ENCODE measurements at regions of chr11 and their contacts with region 1.

Region 1: DNA sequence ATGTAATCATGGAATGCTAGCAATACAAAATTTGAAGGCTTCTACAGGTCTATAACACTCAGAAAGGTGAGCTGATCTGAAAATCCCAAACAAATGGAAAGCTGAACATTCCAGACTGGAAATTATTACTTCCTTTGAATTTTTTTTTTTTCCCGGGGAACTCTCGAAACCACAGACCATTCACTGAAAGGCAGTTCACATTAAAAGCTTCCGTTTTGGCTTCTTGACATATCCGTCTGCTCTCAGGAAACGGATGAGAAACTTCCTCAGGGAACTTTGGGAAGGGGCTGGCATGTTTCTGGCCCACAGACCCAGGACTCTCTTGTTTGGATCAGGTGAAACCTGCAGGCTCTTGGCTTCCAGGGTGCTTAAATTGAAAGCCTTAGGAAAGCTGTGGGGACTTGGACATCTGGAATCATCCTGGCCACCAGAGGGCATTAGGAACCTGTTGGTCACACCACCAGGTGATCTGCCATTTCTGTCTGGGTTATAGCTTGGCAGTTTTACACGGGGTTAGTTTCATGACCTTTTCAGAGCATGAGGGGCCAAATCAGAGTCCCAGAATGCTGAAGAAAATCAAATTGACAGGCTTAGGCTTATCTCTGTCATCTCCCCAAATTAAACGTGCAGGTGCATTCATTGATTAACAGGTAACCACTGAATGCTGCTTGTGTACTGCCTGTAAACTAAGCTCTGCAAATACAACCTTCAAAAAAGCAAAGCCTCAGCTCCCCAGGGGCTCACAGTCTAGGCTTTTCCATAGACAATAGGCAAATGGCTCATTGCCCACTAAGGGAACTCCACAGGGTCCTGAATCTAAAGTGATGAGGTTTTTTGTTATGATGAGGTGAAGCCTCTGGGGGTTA is 22.7 kb upstream of the GRAMD1B start:
- DNase-seq: peak; percentile 43 to 85 (median 58)
- ATAC-seq: peak; percentile 78
- H3K4me3 ChIP-seq: no peak overlapping the region
- H3K4me3 Mint-ChIP-seq: no peak overlapping the region
- H3K27ac ChIP-seq: no peak overlapping the region
- H3K27ac Mint-ChIP-seq: no peak overlapping the region
- H3K4me1 ChIP-seq: peaks cover 5% of the 10 kb centered on the region
- H3K4me1 Mint-ChIP-seq: peaks cover 5% of the 10 kb centered on the region
- H3K27me3 ChIP-seq: peaks cover 0 to 6% of the 10 kb centered on the region in 2 experiments
- H3K27me3 Mint-ChIP-seq: no peaks in the 10 kb centered on the region
- CTCF ChIP-seq: peak; percentile 81

Region 2: GRCh38 chr11:121557348-121557747 is 1850.0 kb before region 1 on chr11:
- CTCF ChIA-PET with region 1: no interaction called
- POLR2A ChIA-PET with region 1: no interaction called
- intact Hi-C with region 1: no loop called
- DNase-seq: no peak
- ATAC-seq: no peak
- H3K4me3 ChIP-seq: no peak overlapping the region
- H3K4me3 Mint-ChIP-seq: no peak overlapping the region
- H3K27ac ChIP-seq: no peak overlapping the region
- H3K27ac Mint-ChIP-seq: peak overlapping the region; percentile 52
- H3K4me1 ChIP-seq: no peaks in the 10 kb centered on the region
- H3K4me1 Mint-ChIP-seq: peaks cover 28% of the 10 kb centered on the region
- H3K27me3 ChIP-seq: no peaks in the 10 kb centered on the region
- H3K27me3 Mint-ChIP-seq: no peaks in the 10 kb centered on the region
- CTCF ChIP-seq: no peak

Region 3: GRCh38 chr11:123272565-123272964 is 134.8 kb before region 1 on chr11:
- CTCF ChIA-PET with region 1: no interaction called
- POLR2A ChIA-PET with region 1: no interaction called
- intact Hi-C with region 1: no loop called
- DNase-seq: no peak
- ATAC-seq: no peak
- H3K4me3 ChIP-seq: no peak overlapping the region
- H3K4me3 Mint-ChIP-seq: no peak overlapping the region
- H3K27ac ChIP-seq: no peak overlapping the region
- H3K27ac Mint-ChIP-seq: no peak overlapping the region
- H3K4me1 ChIP-seq: no peaks in the 10 kb centered on the region
- H3K4me1 Mint-ChIP-seq: peaks cover 8% of the 10 kb centered on the region
- H3K27me3 ChIP-seq: no peaks in the 10 kb centered on the region
- H3K27me3 Mint-ChIP-seq: peaks cover 1% of the 10 kb centered on the region
- CTCF ChIP-seq: no peak

Region 4: GRCh38 chr11:123301696-123302400 is 105.5 kb before region 1 on chr11:
- CTCF ChIA-PET with region 1: no interaction called
- POLR2A ChIA-PET with region 1: no interaction called
- intact Hi-C with region 1: loop called in 1 of 2 experiments (anchors 5 kb)
- DNase-seq: peak; percentile 26 to 85 (median 60)
- ATAC-seq: peak; percentile 77
- H3K4me3 ChIP-seq: peak overlapping the region; percentile 61
- H3K4me3 Mint-ChIP-seq: peak overlapping the region; percentile 59
- H3K27ac ChIP-seq: peak overlapping the region in 1 of 2 donors; percentile 13
- H3K27ac Mint-ChIP-seq: peak overlapping the region; percentile 7
- H3K4me1 ChIP-seq: peaks cover 40% of the 10 kb centered on the region
- H3K4me1 Mint-ChIP-seq: peaks cover 37% of the 10 kb centered on the region
- H3K27me3 ChIP-seq: no peaks in the 10 kb centered on the region
- H3K27me3 Mint-ChIP-seq: no peaks in the 10 kb centered on the region
- CTCF ChIP-seq: peak; percentile 85

Region 5: DNA sequence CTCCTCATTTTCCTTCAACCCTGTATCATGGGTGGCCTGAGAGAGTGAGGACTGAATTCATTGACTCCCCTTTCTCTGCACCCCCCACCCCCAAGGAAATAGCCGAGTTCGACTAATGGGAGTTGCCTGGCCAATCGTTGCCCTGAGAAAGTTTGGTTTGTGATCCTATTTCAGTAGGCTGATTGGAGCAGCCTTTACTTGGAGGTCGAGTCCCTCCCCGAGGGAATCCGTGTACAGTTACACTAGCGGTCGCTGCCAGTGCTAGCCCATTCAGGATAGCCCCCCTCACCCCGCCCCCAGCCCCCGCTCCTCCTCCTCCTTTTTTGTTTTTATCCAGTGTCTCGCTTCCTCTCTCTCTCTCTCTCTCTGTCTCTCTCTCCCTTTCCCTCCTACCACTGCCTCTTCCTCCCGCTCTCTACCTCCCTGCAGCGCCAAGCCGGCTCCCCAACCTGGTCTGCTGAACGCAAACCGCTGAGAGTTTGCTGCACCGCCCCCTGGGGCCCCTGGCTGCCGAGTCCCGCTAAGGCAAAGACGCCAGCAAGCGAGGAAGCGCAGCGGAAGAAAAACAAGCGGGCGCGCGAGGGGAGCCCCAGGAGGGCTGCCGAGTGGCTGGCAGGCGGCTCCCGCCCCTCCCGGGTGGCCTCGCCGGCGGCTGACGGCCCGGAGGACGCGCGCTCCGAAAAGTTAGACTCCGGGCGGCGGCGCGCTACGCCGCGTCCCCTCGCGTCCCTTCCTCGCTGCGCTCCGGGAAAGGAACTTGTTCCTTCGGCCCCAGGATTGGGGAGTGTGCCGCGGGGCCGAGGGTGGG is 22.8 kb after region 1 on chr11 and contains the start of gene GRAMD1B:
- CTCF ChIA-PET with region 1: interaction called, 20 read pairs
- POLR2A ChIA-PET with region 1: interaction called, 11 read pairs
- intact Hi-C with region 1: loop called (anchors 1 to 2 kb)
- DNase-seq: peak; percentile 66 to 88 (median 78)
- ATAC-seq: peak; percentile 85
- H3K4me3 ChIP-seq: peak within 1 kb of the TSS; percentile 74
- H3K4me3 Mint-ChIP-seq: peak within 1 kb of the TSS; percentile 96
- H3K27ac ChIP-seq: peak within 1 kb of the TSS; percentile 6 to 42
- H3K27ac Mint-ChIP-seq: peak within 1 kb of the TSS; percentile 76
- H3K4me1 ChIP-seq: peaks cover 24% of the 10 kb centered on the region
- H3K4me1 Mint-ChIP-seq: peaks cover 28% of the 10 kb centered on the region
- H3K27me3 ChIP-seq: no peaks in the 10 kb centered on the region
- H3K27me3 Mint-ChIP-seq: no peaks in the 10 kb centered on the region
- CTCF ChIP-seq: no peak
- total RNA-seq, gene GRAMD1B: 16.1 to 21.8 TPM

Region 6: DNA sequence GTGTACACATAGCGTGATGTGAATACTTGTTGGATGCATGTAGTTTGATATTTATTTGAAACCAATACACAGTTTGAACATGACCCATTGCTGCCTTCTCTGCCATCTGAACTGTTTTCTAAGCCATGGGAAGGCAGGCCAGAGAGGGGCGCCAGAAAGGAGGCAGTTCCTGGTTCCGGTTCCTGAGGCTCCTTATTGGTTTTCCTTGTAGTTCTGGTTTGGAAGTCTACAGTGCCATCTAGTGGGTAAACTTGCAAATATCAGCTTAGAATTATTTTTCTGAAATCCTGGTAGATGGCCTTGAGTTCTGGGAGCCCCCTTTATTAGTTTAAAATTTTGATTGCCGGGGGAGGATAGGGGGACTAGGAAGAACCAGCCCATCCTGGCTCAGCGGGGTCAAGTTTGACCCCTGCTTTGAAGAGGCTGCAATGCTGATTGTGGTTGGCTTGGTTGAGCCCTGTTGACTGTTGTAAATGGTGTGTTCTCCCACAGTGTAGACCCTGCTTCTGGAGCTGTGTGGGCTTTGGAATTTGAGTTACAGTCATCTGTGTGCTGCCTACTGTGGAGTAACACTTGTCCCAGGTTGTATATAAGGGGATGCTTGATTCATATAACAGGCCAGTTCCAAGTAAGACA is 71.1 kb after region 1 on chr11:
- CTCF ChIA-PET with region 1: interaction called, 59 read pairs
- POLR2A ChIA-PET with region 1: interaction called, 34 read pairs
- intact Hi-C with region 1: loop called (anchors 1 kb)
- DNase-seq: peak in 9 of 14 experiments; percentile 4 to 78 (median 30)
- ATAC-seq: peak; percentile 26
- H3K4me3 ChIP-seq: peak overlapping the region; percentile 16
- H3K4me3 Mint-ChIP-seq: no peak overlapping the region
- H3K27ac ChIP-seq: no peak overlapping the region
- H3K27ac Mint-ChIP-seq: no peak overlapping the region
- H3K4me1 ChIP-seq: peaks cover 11% of the 10 kb centered on the region
- H3K4me1 Mint-ChIP-seq: no peaks in the 10 kb centered on the region
- H3K27me3 ChIP-seq: no peaks in the 10 kb centered on the region
- H3K27me3 Mint-ChIP-seq: no peaks in the 10 kb centered on the region
- CTCF ChIP-seq: peak; percentile 88

Region 7: GRCh38 chr11:123580557-123581275 is 173.4 kb after region 1 on chr11:
- CTCF ChIA-PET with region 1: interaction called, 5 read pairs
- POLR2A ChIA-PET with region 1: no interaction called
- intact Hi-C with region 1: loop called in 1 of 2 experiments (anchors 5 kb)
- DNase-seq: peak; percentile 40 to 83 (median 58)
- ATAC-seq: peak; percentile 97
- H3K4me3 ChIP-seq: no peak overlapping the region
- H3K4me3 Mint-ChIP-seq: no peak overlapping the region
- H3K27ac ChIP-seq: no peak overlapping the region
- H3K27ac Mint-ChIP-seq: no peak overlapping the region
- H3K4me1 ChIP-seq: peaks cover 20% of the 10 kb centered on the region
- H3K4me1 Mint-ChIP-seq: peaks cover 20% of the 10 kb centered on the region
- H3K27me3 ChIP-seq: no peaks in the 10 kb centered on the region
- H3K27me3 Mint-ChIP-seq: no peaks in the 10 kb centered on the region
- CTCF ChIP-seq: peak; percentile 96